ENCODE measurements at regions of chr21 and their contacts with region 1.

Region 1: DNA sequence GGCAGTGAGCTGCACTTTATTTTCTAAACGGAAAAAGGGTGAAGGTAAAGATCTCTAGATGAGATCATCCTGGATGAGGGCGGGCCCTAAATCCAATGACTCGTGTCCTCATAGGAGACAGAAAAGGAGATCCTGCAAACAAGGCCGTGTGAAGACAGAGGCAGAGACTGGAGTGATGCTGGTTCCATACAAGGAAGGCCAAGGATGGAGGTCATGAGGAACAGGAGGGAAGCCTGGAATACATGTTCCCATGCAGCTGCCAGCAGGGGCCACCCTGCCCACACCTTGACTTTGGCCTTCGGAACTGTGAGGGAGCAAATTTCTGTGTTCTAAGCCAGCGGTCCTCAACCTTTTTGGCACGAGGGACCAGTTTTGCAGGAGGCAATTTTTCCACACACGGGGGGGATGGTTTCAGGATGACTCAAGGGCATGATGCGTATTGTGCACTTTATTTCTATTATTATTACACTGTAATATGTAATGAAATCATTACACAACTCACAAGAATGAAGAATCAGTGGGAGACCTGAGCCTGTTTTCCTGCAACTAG is 94.3 kb downstream of the PSMG1 start:
- DNase-seq: peak; percentile 71 to 94
- H3K4me3 ChIP-seq: no peak overlapping the region
- H3K27ac ChIP-seq: peak overlapping the region; percentile 94 to 97
- H3K4me1 ChIP-seq: peaks cover 12 to 33% of the 10 kb centered on the region in 2 donors
- H3K27me3 ChIP-seq: no peaks in the 10 kb centered on the region
- CTCF ChIP-seq: peak in 2 of 3 experiments; percentile 26 to 38

Region 2: GRCh38 chr21:38733973-38734546 is 354.8 kb before region 1 on chr21:
- intact Hi-C with region 1: loop called (anchors 5 kb)
- DNase-seq: peak; percentile 55 to 96
- H3K4me3 ChIP-seq: peak overlapping the region; percentile 36 to 56
- H3K27ac ChIP-seq: peak overlapping the region; percentile 78 to 81
- H3K4me1 ChIP-seq: peaks cover 0 to 20% of the 10 kb centered on the region in 2 donors
- H3K27me3 ChIP-seq: no peaks in the 10 kb centered on the region
- CTCF ChIP-seq: peak; percentile 84 to 92 (median 92)

Region 3: DNA sequence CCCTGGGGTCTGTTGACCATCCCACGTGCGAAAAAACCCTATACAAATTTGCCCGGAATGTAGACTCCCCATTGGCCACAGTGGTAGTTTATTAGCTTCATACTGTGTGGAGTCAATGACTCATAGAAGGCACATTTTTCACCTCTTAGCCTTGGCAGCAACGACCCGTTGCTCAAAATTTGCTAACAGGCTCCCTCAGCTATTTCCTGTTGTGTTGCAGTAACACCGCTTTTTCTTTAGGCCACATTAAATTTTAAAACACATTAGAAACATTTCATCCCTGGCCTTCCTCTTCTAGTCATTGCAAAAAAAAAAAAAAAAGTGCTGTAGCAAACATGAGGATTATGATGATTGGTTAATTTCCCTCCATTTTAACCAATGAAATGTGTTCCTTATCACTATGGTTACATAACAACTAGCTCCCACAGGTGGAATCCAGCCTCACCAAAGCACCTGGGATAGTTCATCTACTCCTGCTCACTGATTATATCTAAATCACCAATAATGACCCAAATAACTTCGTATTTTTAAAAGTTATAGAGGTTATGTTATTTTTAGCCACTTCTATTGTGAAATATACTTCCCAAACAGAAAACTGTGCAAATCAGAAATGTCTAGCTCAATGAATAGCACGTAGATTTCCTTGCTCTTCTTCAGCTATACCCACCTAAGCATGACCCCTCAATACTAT is 333.1 kb before region 1 on chr21:
- intact Hi-C with region 1: loop called (anchors 5 kb)
- DNase-seq: peak; percentile 40 to 93
- H3K4me3 ChIP-seq: no peak overlapping the region
- H3K27ac ChIP-seq: peak overlapping the region; percentile 77 to 92
- H3K4me1 ChIP-seq: peaks cover 38 to 84% of the 10 kb centered on the region in 2 donors
- H3K27me3 ChIP-seq: no peaks in the 10 kb centered on the region
- CTCF ChIP-seq: no peak

Region 4: GRCh38 chr21:38819714-38820183 is 269.2 kb before region 1 on chr21:
- intact Hi-C with region 1: loop called (anchors 5 kb)
- DNase-seq: peak in 1 of 2 donors; percentile 63
- H3K4me3 ChIP-seq: no peak overlapping the region
- H3K27ac ChIP-seq: peak overlapping the region; percentile 93 to 96
- H3K4me1 ChIP-seq: peaks cover 22 to 54% of the 10 kb centered on the region in 2 donors
- H3K27me3 ChIP-seq: no peaks in the 10 kb centered on the region
- CTCF ChIP-seq: no peak

Region 5: DNA sequence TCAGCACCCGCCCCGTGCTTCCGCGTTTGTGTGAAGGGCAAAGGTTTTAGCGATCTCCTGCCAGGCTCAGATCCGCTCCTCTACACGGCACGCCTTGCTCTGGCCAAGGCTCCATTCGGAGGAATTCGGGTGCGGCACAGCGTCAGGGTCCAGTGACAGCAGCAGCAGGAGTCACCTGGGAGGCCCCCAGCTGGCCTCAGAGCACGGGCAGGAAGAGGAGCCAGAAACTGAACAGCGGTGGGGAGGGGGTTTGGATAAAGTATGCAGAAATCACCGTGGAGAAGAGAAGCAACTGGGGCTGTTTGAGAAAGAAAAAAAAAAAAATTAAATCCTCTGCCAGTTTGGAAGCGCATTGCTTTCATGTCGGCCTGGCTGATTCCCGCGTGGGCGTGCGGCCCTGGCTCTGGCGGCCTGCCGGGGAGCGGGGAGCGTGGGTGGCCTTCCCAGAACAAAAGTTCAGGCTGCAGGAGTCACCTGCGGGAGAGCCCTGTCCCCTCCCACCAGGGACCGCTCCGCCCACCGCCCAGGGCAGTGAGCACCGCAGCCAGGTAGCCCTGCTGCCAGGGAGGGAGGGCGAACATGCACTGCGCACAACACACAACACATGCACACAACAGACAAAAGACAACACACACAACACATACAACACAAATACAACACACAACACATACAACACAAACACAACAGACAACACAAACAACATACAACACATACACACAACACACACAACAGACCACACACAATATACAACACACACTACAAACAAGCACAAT is 175.6 kb before region 1 on chr21:
- intact Hi-C with region 1: loop called (anchors 5 kb)
- DNase-seq: peak in 1 of 2 donors; percentile 88
- H3K4me3 ChIP-seq: peak overlapping the region; percentile 16 to 45
- H3K27ac ChIP-seq: peak overlapping the region; percentile 79 to 90
- H3K4me1 ChIP-seq: peaks cover 3 to 19% of the 10 kb centered on the region in 2 donors
- H3K27me3 ChIP-seq: no peaks in the 10 kb centered on the region
- CTCF ChIP-seq: no peak

Region 6: GRCh38 chr21:38925923-38926322 is 163.0 kb before region 1 on chr21:
- intact Hi-C with region 1: no loop called
- DNase-seq: peak; percentile 42 to 88
- H3K4me3 ChIP-seq: peak overlapping the region; percentile 49 to 54
- H3K27ac ChIP-seq: peak overlapping the region; percentile 93 to 94
- H3K4me1 ChIP-seq: peaks cover 8 to 35% of the 10 kb centered on the region in 2 donors
- H3K27me3 ChIP-seq: no peaks in the 10 kb centered on the region
- CTCF ChIP-seq: no peak

Region 7: GRCh38 chr21:39105341-39105765 is 16.4 kb after region 1 on chr21:
- intact Hi-C with region 1: loop called (anchors 1 kb)
- DNase-seq: peak in 1 of 2 donors; percentile 56
- H3K4me3 ChIP-seq: no peak overlapping the region
- H3K27ac ChIP-seq: peak overlapping the region; percentile 32 to 69
- H3K4me1 ChIP-seq: peaks cover 0 to 15% of the 10 kb centered on the region in 2 donors
- H3K27me3 ChIP-seq: no peaks in the 10 kb centered on the region
- CTCF ChIP-seq: no peak

Region 8: GRCh38 chr21:39125752-39126485 is 37.0 kb after region 1 on chr21:
- intact Hi-C with region 1: loop called (anchors 5 kb)
- DNase-seq: peak in 1 of 2 donors; percentile 84
- H3K4me3 ChIP-seq: no peak overlapping the region
- H3K27ac ChIP-seq: peak overlapping the region in 1 of 2 donors; percentile 81
- H3K4me1 ChIP-seq: no peaks in the 10 kb centered on the region
- H3K27me3 ChIP-seq: no peaks in the 10 kb centered on the region
- CTCF ChIP-seq: peak; percentile 54 to 79 (median 76)

Region 9: DNA sequence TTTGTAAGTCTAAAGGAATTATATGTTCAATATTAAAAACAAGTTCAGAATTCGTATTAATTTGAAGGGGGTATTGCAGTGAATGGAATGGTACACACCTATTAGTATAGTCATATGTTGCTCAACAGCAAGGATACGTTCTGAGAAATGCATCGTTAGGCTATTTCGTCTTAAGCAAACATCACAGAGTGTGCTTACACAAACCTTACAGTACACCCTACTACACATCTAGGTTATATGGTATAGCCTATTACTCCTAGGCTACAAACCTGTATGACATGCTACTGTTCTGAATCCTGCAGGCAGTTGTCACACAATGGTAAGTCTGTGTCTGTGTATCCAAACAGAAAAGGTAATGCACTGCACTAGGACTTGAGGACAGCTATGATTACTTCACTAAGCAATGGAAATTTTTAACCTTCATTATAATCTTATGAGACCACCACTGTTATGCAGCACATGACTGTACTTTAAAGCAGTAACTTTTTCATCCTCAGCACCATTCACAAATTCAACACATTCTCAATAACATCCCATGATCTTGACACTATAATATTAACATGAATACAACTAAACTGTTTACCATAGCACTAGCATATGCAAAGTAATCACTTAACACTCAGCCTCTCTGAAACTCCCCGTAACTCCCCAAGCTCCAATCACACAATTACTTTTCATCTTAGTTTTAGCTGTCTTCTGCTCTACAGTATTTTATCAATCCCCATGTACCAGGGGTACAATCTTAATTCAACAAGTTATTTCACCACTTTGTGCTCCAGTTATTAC is 108.7 kb after region 1 on chr21:
- intact Hi-C with region 1: no loop called
- DNase-seq: no peak
- H3K4me3 ChIP-seq: no peak overlapping the region
- H3K27ac ChIP-seq: no peak overlapping the region
- H3K4me1 ChIP-seq: no peaks in the 10 kb centered on the region
- H3K27me3 ChIP-seq: no peaks in the 10 kb centered on the region
- CTCF ChIP-seq: no peak